ENCODE measurements at regions of chr6 and their contacts with region 1.

Region 1: DNA sequence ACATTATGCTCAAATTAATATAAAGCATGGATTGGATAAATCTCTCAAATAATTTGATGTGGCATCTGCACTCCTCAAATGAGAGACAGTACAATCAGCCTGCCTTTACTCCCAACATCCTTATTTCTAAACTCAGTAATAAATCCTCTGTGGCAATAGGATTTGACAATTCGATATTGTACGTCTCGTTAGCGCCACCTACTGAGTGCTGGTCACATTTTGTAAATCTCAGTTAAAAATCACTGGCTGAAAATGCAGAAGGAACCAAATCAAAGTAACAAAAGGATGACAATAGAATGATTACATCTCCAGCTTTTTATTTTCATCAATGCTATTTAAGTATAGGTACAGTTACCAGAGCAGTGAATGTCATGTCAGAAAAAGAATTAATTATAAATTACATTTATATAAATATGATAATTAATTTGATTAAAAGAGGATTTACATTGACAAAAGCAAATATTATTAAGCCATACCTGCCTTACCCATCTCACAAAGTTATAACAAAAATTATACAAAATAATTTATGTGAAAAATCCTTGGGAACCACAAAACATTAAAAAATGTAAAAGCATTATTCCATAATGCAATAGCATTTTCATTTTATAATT is 20.2 kb upstream of the GJE1 start:
- DNase-seq: peak; percentile 75
- H3K4me3 Mint-ChIP-seq: no peak overlapping the region
- H3K27ac Mint-ChIP-seq: no peak overlapping the region
- H3K4me1 Mint-ChIP-seq: no peaks in the 10 kb centered on the region
- H3K27me3 Mint-ChIP-seq: peaks cover 2% of the 10 kb centered on the region

Region 2: DNA sequence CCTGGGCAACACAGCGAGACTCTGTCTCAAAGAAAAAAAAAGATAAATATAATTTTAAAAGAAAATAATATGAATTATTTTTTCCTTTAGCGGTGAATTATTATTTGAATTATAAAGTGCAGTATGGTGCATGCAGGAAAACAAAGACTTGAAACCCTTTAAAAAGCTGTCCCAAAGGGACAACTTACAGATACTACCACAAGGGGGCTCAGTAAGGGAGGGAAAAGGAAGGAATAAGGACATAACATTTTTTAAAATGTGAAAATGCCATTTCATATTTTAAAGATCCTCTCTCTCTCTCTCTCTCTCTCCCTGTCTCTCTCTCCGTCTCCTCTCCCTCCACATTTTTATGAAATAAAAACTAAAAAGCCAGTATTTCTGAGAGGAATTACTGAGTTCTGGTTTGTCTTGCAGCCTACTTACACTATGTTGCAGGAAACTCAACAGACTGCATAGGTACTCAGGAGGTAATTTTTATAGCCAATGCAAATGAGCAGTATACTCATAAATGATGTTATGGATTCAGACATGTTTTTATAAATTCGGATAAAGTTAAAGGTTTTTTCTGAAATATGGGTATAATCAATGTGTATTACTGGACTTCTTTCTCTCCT is 434.9 kb before region 1 on chr6:
- CTCF ChIA-PET with region 1: interaction called, 6 read pairs
- POLR2A ChIA-PET with region 1: no interaction called
- intact Hi-C with region 1: loop called (anchors 1 kb)
- DNase-seq: no peak
- H3K4me3 Mint-ChIP-seq: no peak overlapping the region
- H3K27ac Mint-ChIP-seq: no peak overlapping the region
- H3K4me1 Mint-ChIP-seq: peaks cover 3% of the 10 kb centered on the region
- H3K27me3 Mint-ChIP-seq: no peaks in the 10 kb centered on the region

Measured in activated CD4-positive, alpha-beta memory T cell treated with anti-CD3 and anti-CD28 coated beads for 36 hours (primary cell).